ENCODE measurements at regions of chr21 and their contacts with region 1.

Region 1: GRCh38 chr21:42009831-42010523 is at the start of gene ZBTB21:
- DNase-seq: peak; percentile 96 to 99 (median 98)
- ATAC-seq: peak; percentile 73
- H3K4me3 ChIP-seq: peak within 1 kb of the TSS; percentile 83
- H3K4me3 Mint-ChIP-seq: peak within 1 kb of the TSS; percentile 100
- H3K27ac ChIP-seq: peak within 1 kb of the TSS; percentile 91 to 100
- H3K27ac Mint-ChIP-seq: peak within 1 kb of the TSS; percentile 99
- H3K4me1 ChIP-seq: peaks cover 11% of the 10 kb centered on the region
- H3K4me1 Mint-ChIP-seq: peaks cover 34% of the 10 kb centered on the region
- H3K27me3 ChIP-seq: no peaks in the 10 kb centered on the region
- H3K27me3 Mint-ChIP-seq: no peaks in the 10 kb centered on the region
- CTCF ChIP-seq: no peak
- total RNA-seq, gene ZBTB21: 132 to 139 TPM

Region 2: GRCh38 chr21:41289426-41289825 is 720.6 kb before region 1 on chr21:
- CTCF ChIA-PET with region 1: no interaction called
- POLR2A ChIA-PET with region 1: no interaction called
- intact Hi-C with region 1: no loop called
- DNase-seq: no peak
- ATAC-seq: no peak
- H3K4me3 ChIP-seq: no peak overlapping the region
- H3K4me3 Mint-ChIP-seq: no peak overlapping the region
- H3K27ac ChIP-seq: no peak overlapping the region
- H3K27ac Mint-ChIP-seq: no peak overlapping the region
- H3K4me1 ChIP-seq: peaks cover 5% of the 10 kb centered on the region
- H3K4me1 Mint-ChIP-seq: peaks cover 11% of the 10 kb centered on the region
- H3K27me3 ChIP-seq: peaks cover 0 to 5% of the 10 kb centered on the region in 2 experiments
- H3K27me3 Mint-ChIP-seq: peaks cover 24% of the 10 kb centered on the region
- CTCF ChIP-seq: no peak

Region 3: DNA sequence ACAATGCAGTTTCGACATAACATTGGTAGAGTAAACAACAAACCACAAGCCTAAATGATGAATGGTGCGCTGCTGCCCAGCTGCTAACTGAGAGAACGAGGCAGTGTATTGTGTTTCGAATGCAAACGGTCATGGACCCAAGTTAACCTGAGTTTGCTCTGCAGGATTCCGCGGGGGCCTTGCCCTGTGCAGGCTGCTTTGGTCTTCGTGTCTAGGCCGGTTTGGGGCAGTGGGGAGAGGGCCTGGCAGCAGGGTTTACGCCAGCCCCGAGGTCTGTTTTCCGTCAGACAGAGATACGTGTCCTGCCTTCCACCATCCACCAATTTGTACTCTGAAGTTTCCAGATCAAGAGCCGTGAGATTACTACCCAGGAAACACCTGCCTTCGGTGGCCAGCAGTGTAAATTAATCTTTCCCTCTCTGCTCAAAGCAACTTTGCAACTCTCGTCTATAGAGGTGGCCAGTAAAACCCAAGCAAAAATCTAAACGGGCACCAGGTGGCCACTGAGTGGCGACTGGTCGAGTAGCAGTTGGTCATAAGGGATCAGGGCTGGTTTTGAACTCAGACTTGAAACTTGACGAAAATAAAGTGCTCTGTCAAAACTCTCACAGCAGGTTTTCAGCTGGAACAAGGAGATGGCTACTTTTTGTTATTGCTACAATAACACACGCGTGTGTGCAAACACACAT is 124.5 kb before region 1 on chr21:
- CTCF ChIA-PET with region 1: no interaction called
- POLR2A ChIA-PET with region 1: no interaction called
- intact Hi-C with region 1: loop called in 1 of 2 experiments (anchors 10 kb)
- DNase-seq: no peak
- ATAC-seq: no peak
- H3K4me3 ChIP-seq: no peak overlapping the region
- H3K4me3 Mint-ChIP-seq: no peak overlapping the region
- H3K27ac ChIP-seq: no peak overlapping the region
- H3K27ac Mint-ChIP-seq: no peak overlapping the region
- H3K4me1 ChIP-seq: no peaks in the 10 kb centered on the region
- H3K4me1 Mint-ChIP-seq: peaks cover 6% of the 10 kb centered on the region
- H3K27me3 ChIP-seq: no peaks in the 10 kb centered on the region
- H3K27me3 Mint-ChIP-seq: no peaks in the 10 kb centered on the region
- CTCF ChIP-seq: no peak

Region 4: DNA sequence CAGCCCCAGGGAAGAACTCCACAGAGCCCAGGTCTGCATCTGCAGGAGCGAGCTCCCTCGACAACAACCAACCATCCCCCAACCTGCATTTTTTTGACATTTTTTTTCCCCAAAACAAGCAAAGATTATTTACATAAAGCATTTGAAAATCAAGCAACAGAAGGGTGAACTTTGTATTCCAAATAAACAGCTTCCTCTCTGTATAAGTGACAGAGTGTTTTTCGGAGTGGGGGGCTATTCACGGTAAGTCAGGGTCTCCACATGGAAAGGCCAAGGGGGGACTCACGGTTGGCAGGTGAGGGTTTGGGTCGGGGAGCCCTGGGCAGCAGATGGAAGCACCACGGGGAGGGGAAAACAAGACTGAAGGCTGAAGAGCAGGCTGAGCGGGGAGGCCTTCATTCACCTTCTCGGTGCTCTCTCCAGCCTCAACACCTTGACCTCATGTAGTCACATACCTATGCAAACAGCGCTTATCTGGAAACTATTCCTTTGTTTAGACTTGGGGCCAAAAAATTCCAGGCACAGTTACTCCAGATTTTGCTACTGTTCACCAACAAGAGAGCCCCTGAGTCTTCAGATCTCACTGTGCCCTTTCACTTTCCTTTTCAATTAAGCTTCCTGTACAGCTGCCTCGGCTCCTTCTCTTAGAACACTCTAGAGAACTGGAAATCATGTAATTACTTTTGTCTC is 83.7 kb before region 1 on chr21:
- CTCF ChIA-PET with region 1: no interaction called
- POLR2A ChIA-PET with region 1: interaction called, 14 read pairs
- intact Hi-C with region 1: loop called (anchors 2 to 5 kb)
- DNase-seq: peak in 11 of 14 experiments; percentile 1 to 80 (median 22)
- ATAC-seq: peak; percentile 92
- H3K4me3 ChIP-seq: peak overlapping the region; percentile 67
- H3K4me3 Mint-ChIP-seq: peak overlapping the region; percentile 90
- H3K27ac ChIP-seq: peak overlapping the region; percentile 75 to 83
- H3K27ac Mint-ChIP-seq: peak overlapping the region; percentile 95
- H3K4me1 ChIP-seq: peaks cover 52% of the 10 kb centered on the region
- H3K4me1 Mint-ChIP-seq: peaks cover 55% of the 10 kb centered on the region
- H3K27me3 ChIP-seq: no peaks in the 10 kb centered on the region
- H3K27me3 Mint-ChIP-seq: no peaks in the 10 kb centered on the region
- CTCF ChIP-seq: no peak

Measured in CD4-positive, alpha-beta T cell (primary cell).